ENCODE measurements at regions of chr21 and their contacts with region 1.

Region 1: DNA sequence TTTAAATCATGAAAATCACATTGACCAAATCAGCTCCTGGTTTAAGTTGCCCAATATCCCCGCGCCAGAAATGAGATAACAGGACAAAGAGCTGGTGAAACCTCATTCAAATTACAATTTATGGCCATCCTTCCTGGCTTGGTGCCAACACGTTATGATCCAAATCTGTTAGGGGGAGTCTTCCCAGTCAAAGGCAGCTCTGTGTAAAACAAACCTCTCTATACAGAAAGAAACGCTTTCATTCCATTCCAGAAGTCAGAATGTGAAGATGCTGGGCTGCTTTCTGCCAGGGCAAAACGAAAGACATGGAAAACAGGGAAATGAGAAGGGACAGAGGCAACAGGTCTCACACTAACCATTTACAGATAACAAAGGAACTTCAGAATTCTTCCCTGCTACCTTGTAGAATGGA is 53.5 kb upstream of the TIAM1 start:
- DNase-seq: no peak
- H3K4me3 Mint-ChIP-seq: no peak overlapping the region
- H3K27ac Mint-ChIP-seq: no peak overlapping the region
- H3K4me1 Mint-ChIP-seq: peaks cover 43% of the 10 kb centered on the region
- H3K27me3 Mint-ChIP-seq: peaks cover 3% of the 10 kb centered on the region

Region 2: GRCh38 chr21:31363720-31364119 is 33.8 kb before region 1 on chr21:
- intact Hi-C with region 1: loop called (anchors 5 kb)
- DNase-seq: peak; percentile 46
- H3K4me3 Mint-ChIP-seq: peak overlapping the region; percentile 66
- H3K27ac Mint-ChIP-seq: peak overlapping the region; percentile 77
- H3K4me1 Mint-ChIP-seq: peaks cover 67% of the 10 kb centered on the region
- H3K27me3 Mint-ChIP-seq: no peaks in the 10 kb centered on the region

Region 3: DNA sequence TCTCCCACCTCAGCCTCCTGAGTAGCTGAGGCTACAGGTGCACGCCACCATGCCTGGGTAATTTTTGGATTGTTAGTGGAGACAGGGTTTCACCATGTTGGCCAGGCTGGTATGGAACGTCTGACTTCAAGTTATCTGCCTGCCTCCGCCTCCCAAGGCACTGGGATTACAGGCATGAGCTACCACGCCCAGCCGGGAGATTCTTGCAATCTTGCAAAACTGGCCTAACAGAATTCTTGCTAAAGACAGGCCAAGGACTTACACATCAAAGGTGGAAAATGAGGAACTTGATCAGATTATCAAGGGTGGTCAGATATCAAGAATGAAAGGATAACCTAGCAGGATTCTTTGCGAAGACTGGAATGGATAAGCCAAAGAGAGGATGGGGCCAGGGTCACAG is 44.8 kb after region 1 on chr21:
- intact Hi-C with region 1: no loop called
- DNase-seq: no peak
- H3K4me3 Mint-ChIP-seq: no peak overlapping the region
- H3K27ac Mint-ChIP-seq: no peak overlapping the region
- H3K4me1 Mint-ChIP-seq: peaks cover 38% of the 10 kb centered on the region
- H3K27me3 Mint-ChIP-seq: peaks cover 14% of the 10 kb centered on the region

Region 4: DNA sequence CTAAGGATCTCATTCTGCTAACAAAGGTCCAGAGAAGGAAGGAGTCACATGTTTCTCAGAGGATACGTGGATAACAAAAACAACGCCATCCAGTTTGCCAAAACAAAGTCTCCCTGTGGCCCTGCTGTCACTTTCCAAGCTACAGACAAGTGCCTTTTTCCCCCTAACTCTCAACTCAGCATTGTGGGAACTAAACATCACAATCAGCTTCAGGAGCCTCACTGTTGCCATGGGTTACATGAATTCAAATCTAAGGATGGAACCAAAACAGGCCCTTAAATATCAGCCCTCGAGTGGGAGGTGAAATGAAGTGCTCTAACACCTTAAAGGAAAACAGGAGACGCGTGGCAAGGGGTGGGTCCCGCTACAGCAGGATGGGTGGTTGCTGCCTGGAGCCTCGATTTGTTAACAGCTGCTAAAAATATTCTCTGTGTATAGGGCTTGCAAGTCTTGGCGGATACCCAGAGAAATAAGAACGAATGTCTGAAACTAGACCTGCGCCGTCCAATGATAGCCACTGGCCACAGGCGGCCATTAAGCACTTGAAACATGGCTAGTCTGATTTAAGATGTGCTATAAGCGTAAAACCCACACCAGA is 195.5 kb after region 1 on chr21:
- intact Hi-C with region 1: no loop called
- DNase-seq: no peak
- H3K4me3 Mint-ChIP-seq: no peak overlapping the region
- H3K27ac Mint-ChIP-seq: no peak overlapping the region
- H3K4me1 Mint-ChIP-seq: no peaks in the 10 kb centered on the region
- H3K27me3 Mint-ChIP-seq: peaks cover 8% of the 10 kb centered on the region

Measured in activated T-helper 1 cell treated with anti-CD3 and anti-CD28 coated beads, Interleukin-12 subunit alpha, Interleukin-12 subunit beta, Interleukin-2, Interleukin-4 antibody, amounts not matched to agents 30 ng/mL and 10 ng/mL and 1 ng/mL, durations not matched to agents 14 hours and 24 hours and 36 hours (primary cell).